Cardiac septum (tissue), 1 donor: ENCODE measurements at regions of chr12 and their contacts with region 1.

Region 1: DNA sequence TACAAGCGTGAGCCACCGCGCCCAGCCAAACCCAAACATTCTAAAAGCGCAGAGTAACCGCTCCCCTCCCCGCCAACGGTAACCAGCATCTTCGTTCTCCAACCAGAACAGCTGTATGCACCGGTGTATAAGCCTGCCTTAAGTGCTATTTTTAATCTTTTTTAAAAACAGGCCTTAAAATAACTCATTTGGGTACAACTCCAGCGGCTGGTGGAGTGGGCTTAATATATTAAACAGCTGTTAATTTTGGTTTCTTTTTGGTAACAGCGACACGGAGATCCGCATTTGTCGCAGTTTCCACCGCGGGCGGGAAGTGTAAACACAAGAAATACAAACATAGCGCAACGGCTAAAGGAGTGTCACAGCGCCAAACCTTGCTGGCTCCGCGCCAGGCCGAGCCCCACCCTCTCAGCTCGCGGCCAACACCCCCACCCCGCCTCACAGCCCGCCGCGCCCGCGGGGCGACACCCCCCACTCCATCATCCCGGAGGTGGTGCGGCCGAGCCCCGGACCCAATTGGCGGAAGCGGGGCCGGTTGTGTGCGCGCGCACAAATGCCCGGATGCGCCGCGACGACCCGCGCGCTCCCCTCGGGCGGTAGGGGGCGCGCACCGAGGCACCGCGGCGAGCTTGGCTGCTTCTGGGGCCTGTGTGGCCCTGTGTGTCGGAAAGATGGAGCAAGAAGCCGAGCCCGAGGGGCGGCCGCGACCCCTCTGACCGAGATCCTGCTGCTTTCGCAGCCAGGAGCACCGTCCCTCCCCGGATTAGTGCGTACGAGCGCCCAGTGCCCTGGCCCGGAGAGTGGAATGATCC is at the start of gene MDM2:
- DNase-seq: peak; percentile 95
- total RNA-seq, gene MDM2: 47.9 TPM

Region 2: GRCh38 chr12:68745904-68746571 is 61.7 kb before region 1 on chr12 and contains the start of gene SLC35E3:
- intact Hi-C with region 1: loop called (anchors 2 kb)
- DNase-seq: peak; percentile 98
- total RNA-seq, gene SLC35E3: 6.2 TPM

Region 3: DNA sequence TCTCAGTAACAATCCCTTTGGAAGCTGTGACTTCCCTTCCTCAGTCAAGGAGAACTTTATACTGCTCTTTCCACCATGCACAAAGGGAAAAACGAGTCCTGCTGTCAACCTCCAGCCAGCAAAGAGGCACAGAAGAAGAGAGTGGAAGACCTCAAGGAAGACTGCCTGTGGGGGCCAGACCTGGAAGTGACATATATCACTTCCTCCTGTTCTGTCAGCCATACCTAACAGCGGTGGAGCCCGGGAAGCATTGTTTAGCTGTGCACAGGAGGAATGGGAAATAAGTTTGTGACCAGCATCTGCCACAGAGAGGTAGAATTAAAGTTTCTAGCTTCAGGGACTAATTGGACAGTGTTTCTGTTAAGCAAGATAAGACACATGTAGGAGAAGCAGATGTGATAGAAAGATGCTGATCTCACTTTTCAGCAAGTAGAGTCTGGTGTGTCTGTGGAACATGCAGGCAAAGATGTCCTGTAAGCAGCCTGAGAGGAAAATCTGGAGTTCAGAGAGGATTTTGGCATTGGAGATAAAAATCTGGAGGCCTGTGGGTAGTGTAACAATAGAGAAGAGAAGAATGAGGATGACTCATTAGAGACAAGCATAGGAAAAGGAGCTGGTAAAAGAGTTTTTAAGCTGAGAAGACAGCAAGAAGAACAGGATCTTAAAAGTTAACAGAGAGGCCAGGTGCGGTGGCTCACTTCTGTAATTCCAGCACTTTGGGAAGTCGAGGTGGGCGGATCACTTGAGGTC is 290.0 kb after region 1 on chr12:
- intact Hi-C with region 1: no loop called
- DNase-seq: no peak